ENCODE measurements at regions of chr6 and their contacts with region 1.

Region 1: GRCh38 chr6:46090115-46091079 is 39.4 kb upstream of the ENPP4 start:
- DNase-seq: peak; percentile 10 to 54 (median 39)
- ATAC-seq: peak; percentile 76
- H3K4me3 ChIP-seq: no peak overlapping the region
- H3K4me3 Mint-ChIP-seq: no peak overlapping the region
- H3K27ac ChIP-seq: no peak overlapping the region
- H3K27ac Mint-ChIP-seq: no peak overlapping the region
- H3K4me1 ChIP-seq: no peaks in the 10 kb centered on the region
- H3K4me1 Mint-ChIP-seq: no peaks in the 10 kb centered on the region
- H3K27me3 ChIP-seq: no peaks in the 10 kb centered on the region
- H3K27me3 Mint-ChIP-seq: peaks cover 26 to 44% (median 38%) of the 10 kb centered on the region in 5 donors

Region 2: DNA sequence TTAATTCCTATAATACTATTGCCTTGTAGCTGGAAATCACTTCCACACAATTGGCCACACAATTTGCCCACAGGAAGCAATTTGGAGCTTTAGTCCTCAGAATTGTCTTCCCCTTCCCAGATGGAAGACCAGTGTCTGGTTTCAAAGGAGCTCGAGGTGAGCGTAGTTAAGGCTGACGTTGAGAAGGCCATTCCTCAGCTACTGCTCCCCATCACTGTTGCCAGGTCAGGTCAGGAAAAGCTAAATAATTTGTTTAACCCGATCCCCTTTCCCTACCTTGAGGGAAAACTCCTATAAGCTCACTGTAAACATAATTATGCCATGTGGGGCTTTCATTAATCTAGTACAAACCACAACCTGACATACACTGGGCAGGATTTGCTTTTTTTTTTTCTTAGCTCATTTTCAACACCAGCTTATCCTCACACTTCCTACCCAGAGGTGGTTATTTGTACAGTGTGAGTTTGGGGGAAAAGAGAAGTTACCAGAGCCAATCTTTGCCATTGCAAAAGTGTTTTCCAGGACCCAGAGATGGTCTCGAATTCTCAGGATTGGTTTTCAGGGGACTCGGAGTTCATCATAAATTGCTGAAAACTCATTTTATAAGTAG is 317.4 kb before region 1 on chr6:
- CTCF ChIA-PET with region 1: no interaction called
- POLR2A ChIA-PET with region 1: no interaction called
- intact Hi-C with region 1: no loop called
- DNase-seq: no peak
- ATAC-seq: no peak
- H3K4me3 ChIP-seq: no peak overlapping the region
- H3K4me3 Mint-ChIP-seq: no peak overlapping the region
- H3K27ac ChIP-seq: no peak overlapping the region
- H3K27ac Mint-ChIP-seq: no peak overlapping the region
- H3K4me1 ChIP-seq: no peaks in the 10 kb centered on the region
- H3K4me1 Mint-ChIP-seq: no peaks in the 10 kb centered on the region
- H3K27me3 ChIP-seq: no peaks in the 10 kb centered on the region
- H3K27me3 Mint-ChIP-seq: peaks cover 4 to 14% (median 6%) of the 10 kb centered on the region in 5 donors

Region 3: DNA sequence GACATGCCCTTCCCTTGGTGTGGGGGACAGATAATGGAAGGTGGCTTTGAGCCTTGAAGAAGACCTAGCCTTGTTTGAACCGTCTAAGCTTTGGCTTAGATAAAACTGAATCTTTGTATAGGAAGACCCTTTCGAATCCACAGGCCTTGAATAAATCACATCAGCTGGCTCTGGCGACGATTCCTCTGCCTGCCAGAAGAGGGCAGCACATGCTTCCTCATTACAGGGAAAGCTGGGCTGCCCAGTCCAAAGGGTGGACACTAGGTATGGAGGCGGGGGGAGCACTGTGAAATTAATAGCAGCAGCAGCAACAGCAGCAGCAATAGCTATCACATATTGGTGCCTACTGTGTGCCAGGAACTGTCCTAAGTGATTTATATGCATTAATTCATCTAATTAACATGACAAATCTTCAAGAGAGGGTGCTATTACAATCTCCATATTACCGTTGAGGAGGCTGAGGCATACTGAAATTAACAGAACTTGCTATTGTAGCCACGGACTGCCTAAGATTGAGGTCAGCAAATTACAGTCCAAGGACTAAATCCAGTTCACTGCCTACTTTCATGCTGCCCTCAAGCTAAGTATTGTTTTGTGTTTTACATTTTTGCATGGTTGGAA is 159.9 kb before region 1 on chr6:
- CTCF ChIA-PET with region 1: interaction called, 10 read pairs
- POLR2A ChIA-PET with region 1: no interaction called
- intact Hi-C with region 1: loop called (anchors 1 to 10 kb)
- DNase-seq: peak in 8 of 9 donors; percentile 28 to 55 (median 43)
- ATAC-seq: peak; percentile 71
- H3K4me3 ChIP-seq: no peak overlapping the region
- H3K4me3 Mint-ChIP-seq: no peak overlapping the region
- H3K27ac ChIP-seq: no peak overlapping the region
- H3K27ac Mint-ChIP-seq: no peak overlapping the region
- H3K4me1 ChIP-seq: no peaks in the 10 kb centered on the region
- H3K4me1 Mint-ChIP-seq: peaks cover 0 to 5% (median 0%) of the 10 kb centered on the region in 7 donors
- H3K27me3 ChIP-seq: no peaks in the 10 kb centered on the region
- H3K27me3 Mint-ChIP-seq: peaks cover 0 to 5% (median 0%) of the 10 kb centered on the region in 5 donors

Region 4: DNA sequence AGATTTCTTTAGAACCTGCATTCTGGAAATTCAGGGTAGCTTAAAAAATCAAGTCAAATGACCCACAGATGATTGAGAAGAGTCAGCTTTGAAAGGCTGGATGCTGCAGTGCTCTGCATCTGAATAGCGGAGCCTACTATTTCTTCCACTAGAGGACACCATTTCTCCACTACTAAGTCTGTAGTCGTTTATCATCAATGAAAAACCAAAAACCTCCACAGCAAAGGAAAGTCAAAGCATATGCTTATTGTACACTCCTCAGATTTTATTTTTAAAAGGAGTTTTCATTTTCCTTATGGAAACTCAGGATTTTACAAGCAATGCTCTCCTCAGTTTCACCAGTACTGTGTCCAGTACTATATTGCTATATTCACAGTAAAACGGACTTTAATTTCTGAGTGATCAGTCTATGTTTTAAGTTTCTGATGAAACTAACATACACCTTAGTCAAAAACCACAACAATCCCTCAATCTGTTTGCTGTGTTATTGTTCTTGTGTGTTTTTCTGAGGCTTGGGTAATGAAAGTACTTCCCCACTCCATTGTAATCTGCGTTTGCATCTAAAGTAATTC is 130.9 kb after region 1 on chr6:
- CTCF ChIA-PET with region 1: no interaction called
- POLR2A ChIA-PET with region 1: no interaction called
- intact Hi-C with region 1: loop called (anchors 1 to 2 kb)
- DNase-seq: peak in 1 of 9 donors; percentile 4
- ATAC-seq: peak; percentile 63
- H3K4me3 ChIP-seq: no peak overlapping the region
- H3K4me3 Mint-ChIP-seq: no peak overlapping the region
- H3K27ac ChIP-seq: no peak overlapping the region
- H3K27ac Mint-ChIP-seq: no peak overlapping the region
- H3K4me1 ChIP-seq: no peaks in the 10 kb centered on the region
- H3K4me1 Mint-ChIP-seq: no peaks in the 10 kb centered on the region
- H3K27me3 ChIP-seq: no peaks in the 10 kb centered on the region
- H3K27me3 Mint-ChIP-seq: peaks cover 4 to 11% (median 4%) of the 10 kb centered on the region in 5 donors

Region 5: DNA sequence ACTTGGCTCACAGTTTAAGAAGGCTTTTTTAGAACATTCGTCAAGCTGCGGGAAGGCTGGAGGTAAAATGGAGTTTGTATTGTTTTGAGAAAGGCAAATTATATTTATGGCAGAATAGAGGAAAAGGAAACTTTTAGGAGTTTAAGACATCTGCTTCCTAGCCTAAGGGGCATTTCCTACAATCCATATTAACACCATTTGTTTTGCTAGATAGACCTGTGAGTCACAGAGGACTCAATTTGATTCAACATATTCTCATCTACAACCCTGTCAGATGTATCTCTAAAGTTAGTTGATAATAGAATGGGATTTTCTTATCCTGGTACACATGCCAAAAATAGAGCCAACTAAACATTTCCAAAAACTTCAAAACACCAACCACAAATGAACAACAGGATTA is 365.9 kb after region 1 on chr6:
- CTCF ChIA-PET with region 1: no interaction called
- POLR2A ChIA-PET with region 1: no interaction called
- intact Hi-C with region 1: no loop called
- DNase-seq: no peak
- ATAC-seq: no peak
- H3K4me3 ChIP-seq: no peak overlapping the region
- H3K4me3 Mint-ChIP-seq: no peak overlapping the region
- H3K27ac ChIP-seq: no peak overlapping the region
- H3K27ac Mint-ChIP-seq: no peak overlapping the region
- H3K4me1 ChIP-seq: no peaks in the 10 kb centered on the region
- H3K4me1 Mint-ChIP-seq: no peaks in the 10 kb centered on the region
- H3K27me3 ChIP-seq: no peaks in the 10 kb centered on the region
- H3K27me3 Mint-ChIP-seq: peaks cover 4 to 42% (median 36%) of the 10 kb centered on the region in 5 donors

Region 6: DNA sequence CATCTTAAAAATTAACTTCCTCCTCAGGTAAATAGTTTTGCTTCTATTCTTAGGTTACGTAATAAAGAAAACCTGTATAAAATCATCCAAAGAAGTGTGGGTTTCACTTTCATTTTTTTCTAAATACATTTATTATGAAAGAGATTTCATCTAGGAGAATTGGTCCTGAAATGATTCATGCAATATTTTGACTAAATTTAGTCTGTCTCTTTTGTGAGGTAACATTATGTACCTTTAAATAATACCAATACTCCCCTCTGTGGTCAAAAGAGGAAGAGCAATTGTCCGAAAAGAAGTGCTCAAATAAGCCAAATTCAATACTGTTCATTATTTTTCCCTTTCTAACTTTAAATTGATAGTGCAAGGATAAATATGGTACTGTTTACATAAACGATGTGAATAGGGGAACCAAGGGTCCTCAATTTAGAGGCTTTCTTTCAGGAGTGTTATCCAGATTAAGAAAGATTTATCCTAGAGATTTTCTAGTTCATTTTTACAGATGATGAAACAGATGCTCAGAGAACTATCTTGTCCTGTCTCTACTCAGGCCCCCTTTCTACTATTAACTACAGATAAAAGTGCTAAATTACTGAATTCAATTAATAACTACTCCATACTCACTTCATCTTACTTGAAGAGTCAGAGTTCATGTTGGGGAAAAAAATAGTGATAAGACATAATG is 536.0 kb after region 1 on chr6:
- CTCF ChIA-PET with region 1: interaction called, 5 read pairs
- POLR2A ChIA-PET with region 1: no interaction called
- intact Hi-C with region 1: loop called (anchors 1 kb)
- DNase-seq: peak in 4 of 9 donors; percentile 1 to 8 (median 2)
- ATAC-seq: no peak
- H3K4me3 ChIP-seq: no peak overlapping the region
- H3K4me3 Mint-ChIP-seq: peak overlapping the region in 5 of 10 donors; percentile 5 to 70 (median 47)
- H3K27ac ChIP-seq: no peak overlapping the region
- H3K27ac Mint-ChIP-seq: peak overlapping the region in 1 of 9 donors; percentile 0
- H3K4me1 ChIP-seq: no peaks in the 10 kb centered on the region
- H3K4me1 Mint-ChIP-seq: peaks cover 0 to 6% (median 4%) of the 10 kb centered on the region in 7 donors
- H3K27me3 ChIP-seq: peaks cover 0 to 3% of the 10 kb centered on the region in 2 donors
- H3K27me3 Mint-ChIP-seq: peaks cover 7 to 34% (median 17%) of the 10 kb centered on the region in 5 donors

Measured in naive thymus-derived CD4-positive, alpha-beta T cell (primary cell).